Dendritic cell treated with granulocyte-macrophage colony-stimulating factor and Interleukin-4, amounts not matched to agents 40 ng/mL and 50 ng/mL, for 4 days (primary cell): ENCODE measurements at regions of chr7 and their contacts with region 1.

Region 1: GRCh38 chr7:99910976-99911375 is 8.4 kb downstream of the TRIM4 start:
- H3K4me3 Mint-ChIP-seq: no peak overlapping the region
- H3K27ac Mint-ChIP-seq: no peak overlapping the region
- H3K4me1 Mint-ChIP-seq: peaks cover 11% of the 10 kb centered on the region
- H3K27me3 Mint-ChIP-seq: no peaks in the 10 kb centered on the region

Region 2: GRCh38 chr7:99719996-99720769 is 190.8 kb before region 1 on chr7:
- intact Hi-C with region 1: no loop called
- H3K4me3 Mint-ChIP-seq: no peak overlapping the region
- H3K27ac Mint-ChIP-seq: no peak overlapping the region
- H3K4me1 Mint-ChIP-seq: no peaks in the 10 kb centered on the region
- H3K27me3 Mint-ChIP-seq: no peaks in the 10 kb centered on the region

Region 3: DNA sequence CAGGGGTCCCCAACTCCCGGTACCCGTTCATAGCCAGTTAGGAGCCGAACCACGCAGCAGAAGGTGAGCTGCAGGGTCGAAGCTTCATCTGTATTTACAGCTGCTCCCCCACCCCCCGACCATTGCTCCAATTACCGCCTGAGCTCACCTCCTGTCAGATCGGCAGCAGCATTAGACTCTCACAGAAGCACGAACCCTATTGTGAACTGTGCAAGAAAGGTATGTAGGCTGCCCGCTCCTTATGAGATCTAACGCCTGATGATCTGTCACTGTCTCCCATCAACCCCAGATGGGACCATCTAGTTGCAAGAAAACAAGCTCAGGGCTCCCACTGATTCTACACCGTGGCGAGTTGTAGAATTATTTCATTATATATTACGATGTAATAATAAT is 79.5 kb after region 1 on chr7:
- intact Hi-C with region 1: loop called (anchors 1 kb)
- H3K4me3 Mint-ChIP-seq: no peak overlapping the region
- H3K27ac Mint-ChIP-seq: no peak overlapping the region
- H3K4me1 Mint-ChIP-seq: peaks cover 11% of the 10 kb centered on the region
- H3K27me3 Mint-ChIP-seq: peaks cover 19% of the 10 kb centered on the region